ENCODE measurements at regions of chr10 and their contacts with region 1.

Region 1: DNA sequence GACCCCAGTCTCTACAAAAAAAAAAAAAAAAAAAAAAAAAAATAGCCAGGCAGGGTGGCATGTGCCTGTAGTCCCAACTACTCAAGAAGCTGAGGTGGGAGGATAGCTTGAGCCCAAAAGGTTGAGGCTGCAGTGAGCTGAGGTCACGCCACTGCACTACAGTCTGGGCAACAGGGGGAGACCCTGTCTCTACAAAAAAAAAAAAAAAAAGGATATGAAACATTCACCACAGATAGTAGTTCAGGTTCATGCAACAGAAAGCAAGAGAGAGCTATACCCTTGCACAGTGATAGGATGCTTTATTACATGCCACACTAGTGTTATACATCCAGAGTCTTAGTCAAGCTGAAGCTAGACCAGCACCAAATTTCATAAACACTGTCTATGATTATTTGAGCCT is 148.4 kb upstream of the KAT6B start:
- DNase-seq: peak; percentile 74
- ATAC-seq: peak; percentile 93
- H3K4me3 ChIP-seq: no peak overlapping the region
- H3K27ac ChIP-seq: peak overlapping the region; percentile 52; the same call in 1 of the 2 replicates
- H3K4me1 ChIP-seq: peaks cover 41% of the 10 kb centered on the region
- H3K27me3 ChIP-seq: no peaks in the 10 kb centered on the region
- CTCF ChIP-seq: 0 out of 6 replicates have a peak, but pooled peaks of 1 of the 3 experiments have one; percentile 6
- EP300 ChIP-seq: no peak; a peak in 1 of 4 replicates
- POLR2A ChIP-seq: no peak
- RAD21 ChIP-seq: peak; percentile 26; the same call in 1 of the 2 replicates

Region 2: DNA sequence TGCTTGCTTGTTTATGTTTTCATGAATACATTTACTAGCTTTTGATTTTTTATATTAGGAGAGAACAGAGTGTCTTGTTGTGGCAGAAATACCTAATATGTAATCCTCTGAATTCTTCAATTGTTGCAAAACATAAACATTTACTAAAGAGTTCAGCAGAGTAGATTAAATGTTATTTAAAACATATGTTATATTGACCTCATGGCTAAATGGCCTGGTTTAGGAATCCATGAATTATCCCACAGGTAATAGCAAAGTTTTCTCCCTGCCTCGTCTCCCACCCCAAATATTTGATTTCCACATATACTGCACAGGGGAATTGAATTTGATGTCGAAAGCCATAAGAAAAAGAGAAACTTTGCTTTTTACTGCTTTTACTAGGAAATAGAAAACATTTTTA is 415.1 kb before region 1 on chr10:
- CTCF ChIA-PET with region 1: interaction called, 3 read pairs
- POLR2A ChIA-PET with region 1: no interaction called
- RAD21 ChIA-PET with region 1: no interaction called
- SMC1A ChIA-PET with region 1: interaction called, 3 read pairs
- in situ Hi-C with region 1: no loop called
- intact Hi-C with region 1: loop called (anchors 5 kb)
- DNase-seq: no peak
- ATAC-seq: no peak
- H3K4me3 ChIP-seq: no peak overlapping the region
- H3K27ac ChIP-seq: no peak overlapping the region
- H3K4me1 ChIP-seq: no peaks in the 10 kb centered on the region
- H3K27me3 ChIP-seq: no peaks in the 10 kb centered on the region
- CTCF ChIP-seq: no peak
- EP300 ChIP-seq: no peak
- POLR2A ChIP-seq: no peak
- RAD21 ChIP-seq: no peak

Region 3: GRCh38 chr10:74371696-74372095 is 306.3 kb before region 1 on chr10:
- CTCF ChIA-PET with region 1: no interaction called
- POLR2A ChIA-PET with region 1: no interaction called
- RAD21 ChIA-PET with region 1: no interaction called
- SMC1A ChIA-PET with region 1: no interaction called
- in situ Hi-C with region 1: no loop called
- intact Hi-C with region 1: no loop called
- DNase-seq: no peak
- ATAC-seq: no peak
- H3K4me3 ChIP-seq: no peak overlapping the region
- H3K27ac ChIP-seq: no peak overlapping the region
- H3K4me1 ChIP-seq: no peaks in the 10 kb centered on the region
- H3K27me3 ChIP-seq: no peaks in the 10 kb centered on the region
- CTCF ChIP-seq: no peak
- EP300 ChIP-seq: no peak
- POLR2A ChIP-seq: no peak
- RAD21 ChIP-seq: no peak

Region 4: GRCh38 chr10:74419958-74420375 is 258.0 kb before region 1 on chr10:
- CTCF ChIA-PET with region 1: interaction called, 10 read pairs
- POLR2A ChIA-PET with region 1: no interaction called
- RAD21 ChIA-PET with region 1: interaction called, 12 read pairs
- SMC1A ChIA-PET with region 1: interaction called, 4 read pairs
- in situ Hi-C with region 1: no loop called
- intact Hi-C with region 1: no loop called
- DNase-seq: peak; percentile 5
- ATAC-seq: peak; percentile 84
- H3K4me3 ChIP-seq: no peak overlapping the region
- H3K27ac ChIP-seq: no peak overlapping the region
- H3K4me1 ChIP-seq: no peaks in the 10 kb centered on the region
- H3K27me3 ChIP-seq: no peaks in the 10 kb centered on the region
- CTCF ChIP-seq: peak; percentile 16 to 44 (median 38); a peak in 4 of 6 replicates
- EP300 ChIP-seq: no peak
- POLR2A ChIP-seq: no peak
- RAD21 ChIP-seq: 0 out of 2 replicates have a peak, but pooled peaks have one; percentile 29

Region 5: DNA sequence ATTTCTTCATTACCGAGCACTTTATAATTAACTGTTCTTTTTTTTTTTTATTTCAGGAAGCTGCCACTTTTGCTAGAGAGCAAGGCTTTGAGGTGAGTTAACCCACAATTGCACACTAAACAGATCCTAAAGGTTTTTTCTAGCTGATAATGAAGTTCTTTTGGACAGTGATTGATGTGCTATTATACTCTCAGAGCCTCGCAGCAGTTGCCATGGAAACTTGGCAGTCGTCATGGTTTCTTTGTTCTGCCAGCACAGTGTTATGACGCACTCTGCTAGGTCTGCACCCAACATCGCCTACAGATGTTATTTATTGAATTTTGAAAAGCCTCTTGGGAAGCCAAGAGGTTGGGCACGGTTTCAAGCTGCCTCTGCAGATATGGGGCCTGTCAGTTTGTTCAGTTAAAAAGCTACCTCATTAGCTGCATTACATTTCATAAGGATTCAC is 88.7 kb before region 1 on chr10:
- CTCF ChIA-PET with region 1: interaction called, 6 read pairs
- POLR2A ChIA-PET with region 1: interaction called, 14 read pairs
- RAD21 ChIA-PET with region 1: interaction called, 53 read pairs
- SMC1A ChIA-PET with region 1: interaction called, 58 read pairs
- in situ Hi-C with region 1: no loop called
- intact Hi-C with region 1: loop called (anchors 5 kb)
- DNase-seq: peak; percentile 82
- ATAC-seq: peak; percentile 75
- H3K4me3 ChIP-seq: no peak overlapping the region
- H3K27ac ChIP-seq: no peak overlapping the region
- H3K4me1 ChIP-seq: peaks cover 23% of the 10 kb centered on the region
- H3K27me3 ChIP-seq: no peaks in the 10 kb centered on the region
- CTCF ChIP-seq: no peak
- EP300 ChIP-seq: peak; percentile 80 to 92
- POLR2A ChIP-seq: no peak
- RAD21 ChIP-seq: no peak

Region 6: DNA sequence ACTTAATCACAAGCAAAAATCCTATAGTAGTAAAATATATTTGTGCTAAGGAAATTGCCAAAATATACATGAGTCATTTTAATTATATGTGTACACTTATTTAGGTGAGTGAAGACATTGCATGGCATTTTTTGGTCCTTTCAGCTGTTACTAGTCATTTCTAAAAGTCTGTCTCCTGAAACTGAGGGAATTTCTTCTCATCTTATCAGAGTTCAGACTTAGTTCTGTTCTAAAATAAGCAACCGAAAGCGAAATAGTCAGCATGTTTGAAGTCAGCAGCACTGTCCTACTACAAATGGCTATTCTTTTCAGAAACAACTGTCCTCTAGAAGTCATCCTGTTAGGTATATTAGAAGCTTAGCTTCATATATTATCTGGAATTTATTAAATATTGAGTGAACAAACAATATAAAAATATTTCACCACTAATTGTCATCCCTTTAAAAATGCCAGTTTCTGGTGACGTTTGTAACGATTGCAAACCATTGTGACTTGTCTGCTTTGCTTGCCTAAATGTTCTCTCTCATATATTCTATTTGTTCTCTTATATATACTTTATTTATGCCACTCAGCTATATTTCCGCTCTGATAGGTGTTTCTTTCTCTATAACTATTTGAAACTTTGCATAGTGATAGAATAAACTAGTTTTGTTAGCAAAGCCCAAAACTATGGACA is 78.9 kb before region 1 on chr10:
- CTCF ChIA-PET with region 1: interaction called, 7 read pairs
- POLR2A ChIA-PET with region 1: interaction called, 4 read pairs
- RAD21 ChIA-PET with region 1: interaction called, 22 read pairs
- SMC1A ChIA-PET with region 1: interaction called, 6 read pairs
- in situ Hi-C with region 1: no loop called
- intact Hi-C with region 1: no loop called
- DNase-seq: peak; percentile 78
- ATAC-seq: peak; percentile 95
- H3K4me3 ChIP-seq: no peak overlapping the region
- H3K27ac ChIP-seq: peak overlapping the region; percentile 46
- H3K4me1 ChIP-seq: peaks cover 19% of the 10 kb centered on the region
- H3K27me3 ChIP-seq: no peaks in the 10 kb centered on the region
- CTCF ChIP-seq: no peak
- EP300 ChIP-seq: peak; percentile 75; a peak in 2 of 4 replicates
- POLR2A ChIP-seq: no peak
- RAD21 ChIP-seq: no peak

Region 7: DNA sequence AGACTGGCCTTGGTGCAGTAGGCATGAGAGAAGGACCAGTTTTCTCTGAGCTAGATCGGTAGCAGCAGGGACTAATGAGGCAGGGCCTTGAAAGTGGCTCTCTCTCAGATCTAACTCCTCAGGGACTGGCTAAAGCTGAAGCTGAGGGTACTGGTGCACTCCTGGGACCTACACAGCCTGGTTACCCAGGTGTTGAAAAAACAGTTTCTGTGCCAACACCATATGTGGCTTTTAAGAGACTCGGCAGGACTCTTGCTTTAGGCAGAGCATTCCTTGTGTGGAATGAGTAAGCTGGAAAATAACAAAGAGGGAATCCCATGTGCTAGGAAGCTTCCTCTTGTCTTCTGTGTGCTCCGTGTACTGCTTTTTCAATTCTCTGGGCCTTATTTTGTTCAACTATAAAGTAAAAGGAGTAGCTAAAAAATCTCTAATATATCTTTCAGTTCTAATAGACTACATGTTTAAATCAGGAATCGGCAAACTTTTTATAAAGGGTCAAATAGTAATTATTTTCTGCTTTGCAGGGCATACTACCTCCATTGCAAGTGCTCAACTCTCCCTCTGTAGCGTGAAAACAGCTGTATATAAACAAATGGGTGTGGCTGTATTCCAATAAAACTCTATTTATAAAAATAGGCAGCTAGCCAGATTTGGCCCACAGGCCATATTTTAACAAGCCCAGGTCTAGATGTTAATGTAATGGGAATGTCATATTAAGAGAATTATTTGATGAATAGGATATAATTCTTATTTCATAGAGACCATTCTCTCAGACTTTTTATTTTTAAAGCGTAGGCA is 37.6 kb before region 1 on chr10:
- CTCF ChIA-PET with region 1: no interaction called
- POLR2A ChIA-PET with region 1: interaction called, 6 read pairs
- RAD21 ChIA-PET with region 1: no interaction called
- SMC1A ChIA-PET with region 1: interaction called, 15 read pairs
- in situ Hi-C with region 1: no loop called
- intact Hi-C with region 1: no loop called
- DNase-seq: peak; percentile 31
- ATAC-seq: peak; percentile 82
- H3K4me3 ChIP-seq: no peak overlapping the region
- H3K27ac ChIP-seq: no peak overlapping the region
- H3K4me1 ChIP-seq: no peaks in the 10 kb centered on the region
- H3K27me3 ChIP-seq: no peaks in the 10 kb centered on the region
- CTCF ChIP-seq: no peak
- EP300 ChIP-seq: no peak
- POLR2A ChIP-seq: no peak
- RAD21 ChIP-seq: no peak

Region 8: DNA sequence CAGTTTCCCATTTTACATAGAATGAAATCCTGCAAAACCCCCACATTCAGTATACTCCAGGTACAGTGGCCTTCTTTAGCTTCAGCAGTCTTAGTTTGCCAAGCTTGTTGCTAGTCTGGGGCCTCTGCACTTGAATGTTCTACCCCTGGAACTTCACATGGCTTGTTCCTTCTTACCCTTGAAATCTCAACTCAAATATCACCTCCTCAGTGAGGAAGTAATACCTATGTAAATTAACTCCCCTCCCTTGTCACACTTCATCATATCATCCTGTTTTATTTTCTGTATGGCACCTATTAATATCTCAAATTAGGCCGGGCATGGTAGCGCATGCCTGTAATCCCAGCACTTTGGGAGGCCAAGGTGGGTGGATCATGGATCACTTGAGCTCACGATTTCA is 15.3 kb before region 1 on chr10:
- CTCF ChIA-PET with region 1: interaction called, 7 read pairs
- POLR2A ChIA-PET with region 1: interaction called, 6 read pairs
- RAD21 ChIA-PET with region 1: interaction called, 17 read pairs
- SMC1A ChIA-PET with region 1: interaction called, 21 read pairs
- in situ Hi-C with region 1: no loop called
- intact Hi-C with region 1: no loop called
- DNase-seq: no peak
- ATAC-seq: no peak
- H3K4me3 ChIP-seq: no peak overlapping the region
- H3K27ac ChIP-seq: no peak overlapping the region
- H3K4me1 ChIP-seq: no peaks in the 10 kb centered on the region
- H3K27me3 ChIP-seq: no peaks in the 10 kb centered on the region
- CTCF ChIP-seq: no peak
- EP300 ChIP-seq: no peak
- POLR2A ChIP-seq: no peak
- RAD21 ChIP-seq: no peak